Activated CD4-positive, alpha-beta memory T cell treated with anti-CD3 and anti-CD28 coated beads for 36 hours (primary cell): ENCODE measurements at regions of chr14 and their contacts with region 1.

Region 1: GRCh38 chr14:73290279-73290678 is 53.0 kb downstream of the PAPLN start:
- DNase-seq: peak; percentile 27
- H3K4me3 Mint-ChIP-seq: no peak overlapping the region
- H3K27ac Mint-ChIP-seq: peak overlapping the region; percentile 28
- H3K4me1 Mint-ChIP-seq: peaks cover 27% of the 10 kb centered on the region
- H3K27me3 Mint-ChIP-seq: no peaks in the 10 kb centered on the region

Region 2: GRCh38 chr14:72916177-72916576 is 374.1 kb before region 1 on chr14:
- CTCF ChIA-PET with region 1: no interaction called
- POLR2A ChIA-PET with region 1: no interaction called
- intact Hi-C with region 1: no loop called
- DNase-seq: no peak
- H3K4me3 Mint-ChIP-seq: no peak overlapping the region
- H3K27ac Mint-ChIP-seq: no peak overlapping the region
- H3K4me1 Mint-ChIP-seq: no peaks in the 10 kb centered on the region
- H3K27me3 Mint-ChIP-seq: peaks cover 4% of the 10 kb centered on the region

Region 3: GRCh38 chr14:73223049-73223448 is 67.2 kb before region 1 on chr14:
- CTCF ChIA-PET with region 1: interaction called, 3 read pairs
- POLR2A ChIA-PET with region 1: no interaction called
- intact Hi-C with region 1: loop called (anchors 2 kb)
- DNase-seq: peak; percentile 76
- H3K4me3 Mint-ChIP-seq: no peak overlapping the region
- H3K27ac Mint-ChIP-seq: peak overlapping the region; percentile 77
- H3K4me1 Mint-ChIP-seq: peaks cover 23% of the 10 kb centered on the region
- H3K27me3 Mint-ChIP-seq: no peaks in the 10 kb centered on the region

Region 4: DNA sequence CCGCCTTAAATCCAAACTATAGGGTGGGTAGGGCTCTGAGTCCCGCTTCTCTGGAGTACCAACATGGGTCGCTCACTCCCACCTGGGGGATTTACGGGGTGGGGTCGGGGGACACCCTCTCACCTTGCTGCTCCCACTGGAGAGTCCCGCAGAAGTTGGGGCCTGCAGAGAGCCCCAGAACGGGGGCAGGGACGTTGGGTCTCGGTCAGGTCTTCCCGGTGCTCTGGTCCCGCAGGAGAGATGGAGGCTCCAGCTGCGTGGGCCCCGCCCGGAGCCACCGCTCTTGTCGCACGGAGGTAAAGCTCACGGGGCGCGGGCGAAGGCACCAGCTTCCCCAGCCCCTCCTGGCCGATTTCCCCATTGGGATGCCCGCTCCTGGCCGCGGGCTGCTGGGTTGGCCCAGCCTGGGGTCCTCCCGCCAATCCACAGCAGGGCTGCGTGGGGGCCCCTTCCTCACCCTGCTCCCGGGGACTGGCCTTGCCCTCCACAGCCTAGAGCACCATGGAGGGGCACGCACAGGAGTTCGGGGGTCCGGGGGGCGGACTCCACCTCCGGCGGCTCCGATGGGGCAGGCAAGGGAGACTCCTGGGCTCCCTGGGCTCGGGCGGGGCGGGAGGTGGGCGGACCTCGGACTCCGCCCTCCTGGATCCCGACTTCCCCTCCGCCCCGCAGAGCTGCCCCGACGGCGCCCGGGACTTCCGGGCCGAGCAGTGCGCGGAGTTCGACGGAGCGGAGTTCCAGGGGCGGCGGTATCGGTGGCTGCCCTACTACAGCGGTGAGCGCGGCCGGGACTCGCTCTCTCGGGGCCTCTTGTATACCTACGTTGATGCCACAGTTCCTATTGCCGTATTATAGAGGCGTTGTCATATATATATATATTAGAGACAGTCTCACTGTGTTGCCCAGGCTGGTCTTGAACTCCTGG is 44.6 kb before region 1 on chr14:
- CTCF ChIA-PET with region 1: interaction called, 3 read pairs
- POLR2A ChIA-PET with region 1: no interaction called
- intact Hi-C with region 1: loop called (anchors 5 kb)
- DNase-seq: peak; percentile 64
- H3K4me3 Mint-ChIP-seq: peak overlapping the region; percentile 64
- H3K27ac Mint-ChIP-seq: no peak overlapping the region
- H3K4me1 Mint-ChIP-seq: peaks cover 25% of the 10 kb centered on the region
- H3K27me3 Mint-ChIP-seq: peaks cover 51% of the 10 kb centered on the region

Region 5: GRCh38 chr14:73472185-73473114 is 182.2 kb after region 1 on chr14:
- CTCF ChIA-PET with region 1: interaction called, 167 read pairs
- POLR2A ChIA-PET with region 1: interaction called, 5 read pairs
- intact Hi-C with region 1: loop called (anchors 1 kb)
- DNase-seq: no peak
- H3K4me3 Mint-ChIP-seq: no peak overlapping the region
- H3K27ac Mint-ChIP-seq: no peak overlapping the region
- H3K4me1 Mint-ChIP-seq: peaks cover 17% of the 10 kb centered on the region
- H3K27me3 Mint-ChIP-seq: no peaks in the 10 kb centered on the region